Adrenal gland (tissue), 19 donors: ENCODE measurements at regions of chr3 and their contacts with region 1.

Region 1: GRCh38 chr3:100994809-100995208 is 1.6 kb upstream of the ABI3BP start:
- DNase-seq: no peak
- H3K4me3 ChIP-seq: no peak overlapping the region
- H3K27ac ChIP-seq: no peak overlapping the region
- H3K4me1 ChIP-seq: no peaks in the 10 kb centered on the region
- H3K27me3 ChIP-seq: no peaks in the 10 kb centered on the region
- CTCF ChIP-seq: no peak
- POLR2A ChIP-seq: no peak

Region 2: DNA sequence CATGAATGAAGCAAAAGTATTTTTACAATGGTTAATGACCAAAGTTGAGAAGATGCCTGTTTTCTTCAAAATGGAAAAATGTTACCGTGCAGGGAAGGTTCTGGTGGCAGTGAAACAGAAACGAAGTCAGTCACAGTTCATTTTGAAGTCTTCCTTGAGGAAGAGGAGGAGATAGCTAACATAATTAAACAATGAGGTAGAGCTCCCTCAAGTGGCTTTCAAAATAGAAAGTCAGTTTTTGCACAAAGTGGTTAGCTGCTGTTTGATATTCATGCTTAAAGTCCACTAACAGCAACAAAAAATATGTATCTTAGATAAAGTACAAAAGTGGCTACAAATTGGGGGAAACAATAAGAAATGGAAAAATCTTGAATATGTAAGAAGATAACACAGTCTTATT is 198.3 kb before region 1 on chr3:
- intact Hi-C with region 1: loop called in 1 of 2 experiments (anchors 5 kb)
- DNase-seq: no peak
- H3K4me3 ChIP-seq: no peak overlapping the region
- H3K27ac ChIP-seq: no peak overlapping the region
- H3K4me1 ChIP-seq: no peaks in the 10 kb centered on the region
- H3K27me3 ChIP-seq: no peaks in the 10 kb centered on the region
- CTCF ChIP-seq: peak in 5 of 6 experiments; percentile 18 to 46 (median 36)
- POLR2A ChIP-seq: no peak